Endothelial cell of umbilical vein (primary cell): ENCODE measurements at regions of chr1 and their contacts with region 1.

Region 1: GRCh38 chr1:60573726-60574409 is 500.3 kb upstream of the C1orf87 start:
- DNase-seq: peak; percentile 86
- H3K4me3 ChIP-seq: no peak overlapping the region
- H3K27ac ChIP-seq: peak overlapping the region; percentile 58
- H3K4me1 ChIP-seq: peaks cover 18% of the 10 kb centered on the region
- H3K27me3 ChIP-seq: no peaks in the 10 kb centered on the region
- CTCF ChIP-seq: no peak
- POLR2A ChIP-seq: peak; percentile 35

Region 2: DNA sequence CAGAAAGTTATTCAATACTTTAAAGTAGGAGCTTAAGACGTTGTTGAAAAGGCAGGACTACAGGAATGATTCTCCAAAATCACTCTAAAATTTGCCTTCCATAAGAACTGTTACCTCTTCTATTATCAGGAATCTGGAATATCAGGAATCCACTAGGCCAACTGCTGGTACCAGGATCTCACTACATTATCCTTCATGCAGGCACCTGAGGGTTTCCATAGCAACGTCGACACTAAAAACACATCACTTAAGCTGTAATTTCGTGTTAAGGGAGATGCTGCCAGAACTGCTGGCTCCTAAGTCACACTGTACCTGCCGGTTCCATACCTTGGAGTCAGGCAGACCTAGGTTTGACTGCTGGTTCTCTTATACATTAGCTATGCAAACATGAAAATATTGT is 360.6 kb before region 1 on chr1:
- CTCF ChIA-PET with region 1: no interaction called
- POLR2A ChIA-PET with region 1: no interaction called
- dilution Hi-C with region 1: no loop called
- intact Hi-C with region 1: no loop called
- DNase-seq: no peak
- H3K4me3 ChIP-seq: no peak overlapping the region
- H3K27ac ChIP-seq: no peak overlapping the region
- H3K4me1 ChIP-seq: no peaks in the 10 kb centered on the region
- H3K27me3 ChIP-seq: no peaks in the 10 kb centered on the region
- CTCF ChIP-seq: no peak
- POLR2A ChIP-seq: no peak

Region 3: GRCh38 chr1:60390593-60391282 is 183.1 kb before region 1 on chr1:
- CTCF ChIA-PET with region 1: no interaction called
- POLR2A ChIA-PET with region 1: no interaction called
- dilution Hi-C with region 1: no loop called
- intact Hi-C with region 1: no loop called
- DNase-seq: no peak
- H3K4me3 ChIP-seq: no peak overlapping the region
- H3K27ac ChIP-seq: no peak overlapping the region
- H3K4me1 ChIP-seq: peaks cover 3% of the 10 kb centered on the region
- H3K27me3 ChIP-seq: no peaks in the 10 kb centered on the region
- CTCF ChIP-seq: no peak
- POLR2A ChIP-seq: no peak

Region 4: DNA sequence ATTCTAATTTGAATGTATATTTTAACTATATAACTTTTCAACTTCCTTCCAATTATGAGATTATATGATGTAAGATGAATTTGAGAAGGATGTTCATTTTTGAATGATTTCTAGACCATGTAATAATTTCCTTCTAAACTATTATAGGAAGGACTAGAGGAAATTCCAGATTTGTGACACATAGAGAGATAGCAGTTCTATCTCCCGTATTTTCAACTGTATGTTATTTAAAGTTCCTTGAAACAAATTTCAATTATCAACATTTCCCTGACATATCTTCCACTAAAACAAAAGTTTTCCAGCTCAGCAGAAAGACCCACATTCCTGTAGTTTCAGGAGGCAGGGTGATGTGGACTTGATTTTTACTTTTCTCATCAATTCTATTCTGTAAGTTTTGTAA is 103.6 kb before region 1 on chr1:
- CTCF ChIA-PET with region 1: no interaction called
- POLR2A ChIA-PET with region 1: no interaction called
- dilution Hi-C with region 1: no loop called
- intact Hi-C with region 1: loop called (anchors 1 kb)
- DNase-seq: peak; percentile 66
- H3K4me3 ChIP-seq: no peak overlapping the region
- H3K27ac ChIP-seq: peak overlapping the region; percentile 82
- H3K4me1 ChIP-seq: peaks cover 27% of the 10 kb centered on the region
- H3K27me3 ChIP-seq: no peaks in the 10 kb centered on the region
- CTCF ChIP-seq: no peak
- POLR2A ChIP-seq: no peak

Region 5: DNA sequence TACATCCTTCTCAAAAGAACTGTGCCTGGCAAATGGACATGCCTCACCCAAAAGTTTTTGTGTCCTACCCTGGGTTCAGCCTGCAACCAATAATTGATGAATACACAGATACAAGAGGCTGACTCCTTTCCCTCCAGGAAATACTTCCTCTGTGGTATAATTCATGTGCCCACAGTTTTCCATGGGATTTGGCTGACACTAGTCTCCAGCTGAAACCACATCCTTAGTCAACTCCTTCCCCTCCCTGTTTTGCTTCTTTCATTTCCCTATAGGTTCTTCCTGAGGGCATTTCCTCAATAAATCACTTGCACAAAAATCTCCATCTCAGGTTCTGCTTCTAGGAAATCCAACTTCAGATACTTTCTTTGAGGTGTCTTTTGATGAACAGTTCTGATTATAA is 63.7 kb before region 1 on chr1:
- CTCF ChIA-PET with region 1: no interaction called
- POLR2A ChIA-PET with region 1: no interaction called
- dilution Hi-C with region 1: no loop called
- intact Hi-C with region 1: loop called (anchors 1 kb)
- DNase-seq: peak; percentile 89
- H3K4me3 ChIP-seq: no peak overlapping the region
- H3K27ac ChIP-seq: peak overlapping the region; percentile 13
- H3K4me1 ChIP-seq: peaks cover 28% of the 10 kb centered on the region
- H3K27me3 ChIP-seq: no peaks in the 10 kb centered on the region
- CTCF ChIP-seq: no peak
- POLR2A ChIP-seq: peak; percentile 79

Region 6: GRCh38 chr1:60589916-60590315 is 16.0 kb after region 1 on chr1:
- CTCF ChIA-PET with region 1: interaction called, 4 read pairs
- POLR2A ChIA-PET with region 1: no interaction called
- dilution Hi-C with region 1: no loop called
- intact Hi-C with region 1: loop called (anchors 2 kb)
- DNase-seq: peak; percentile 32
- H3K4me3 ChIP-seq: no peak overlapping the region
- H3K27ac ChIP-seq: no peak overlapping the region
- H3K4me1 ChIP-seq: peaks cover 14% of the 10 kb centered on the region
- H3K27me3 ChIP-seq: no peaks in the 10 kb centered on the region
- CTCF ChIP-seq: no peak
- POLR2A ChIP-seq: no peak

Region 7: DNA sequence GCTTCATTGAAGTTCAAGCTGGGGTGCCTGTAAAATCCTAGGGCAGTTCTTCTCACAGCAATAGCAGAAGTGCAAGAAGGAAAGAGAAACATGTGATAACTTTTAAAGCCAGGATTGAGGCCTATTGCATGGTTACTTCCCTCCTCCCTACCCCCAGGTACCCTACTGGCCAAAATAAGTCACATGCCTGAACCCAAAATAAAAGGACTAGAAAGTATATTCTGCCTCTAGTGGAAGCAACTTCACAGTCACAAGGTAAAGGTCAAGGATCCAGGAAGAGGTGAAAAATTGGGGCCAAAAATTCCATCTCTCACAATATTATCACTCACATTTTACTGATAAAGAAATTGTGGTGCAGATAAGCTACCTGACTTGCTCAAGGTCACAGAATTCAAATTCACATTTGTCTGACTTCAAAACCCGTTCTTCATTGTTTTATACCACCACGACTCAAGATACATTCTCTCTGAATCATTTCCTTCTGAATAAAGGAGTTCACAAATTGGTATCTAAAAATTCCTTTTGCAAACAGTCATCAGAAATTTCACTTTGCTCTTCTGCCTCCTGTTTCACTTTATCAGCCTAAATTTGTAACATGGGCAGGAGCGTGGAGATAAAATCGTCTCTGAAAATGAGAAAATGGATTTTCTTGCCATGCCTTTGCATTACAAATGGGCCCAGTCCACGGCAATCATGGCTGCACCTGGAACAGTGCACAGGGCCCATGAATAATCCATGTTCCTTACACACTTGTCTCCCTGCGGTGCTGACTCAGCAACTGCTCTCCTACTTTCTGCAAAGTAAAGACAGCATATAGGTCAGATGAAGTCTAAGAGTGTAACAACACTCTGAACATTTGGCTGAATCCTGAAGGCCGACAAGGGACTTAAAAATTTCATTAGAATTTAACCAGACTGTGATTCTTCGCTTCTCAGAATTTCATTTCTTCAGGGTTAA is 23.2 kb after region 1 on chr1:
- CTCF ChIA-PET with region 1: interaction called, 3 read pairs
- POLR2A ChIA-PET with region 1: interaction called, 3 read pairs
- dilution Hi-C with region 1: no loop called
- intact Hi-C with region 1: loop called (anchors 1 kb)
- DNase-seq: peak; percentile 57
- H3K4me3 ChIP-seq: no peak overlapping the region
- H3K27ac ChIP-seq: peak overlapping the region; percentile 61
- H3K4me1 ChIP-seq: peaks cover 22% of the 10 kb centered on the region
- H3K27me3 ChIP-seq: no peaks in the 10 kb centered on the region
- CTCF ChIP-seq: peak in 1 of 2 donors; percentile 3
- POLR2A ChIP-seq: no peak

Region 8: DNA sequence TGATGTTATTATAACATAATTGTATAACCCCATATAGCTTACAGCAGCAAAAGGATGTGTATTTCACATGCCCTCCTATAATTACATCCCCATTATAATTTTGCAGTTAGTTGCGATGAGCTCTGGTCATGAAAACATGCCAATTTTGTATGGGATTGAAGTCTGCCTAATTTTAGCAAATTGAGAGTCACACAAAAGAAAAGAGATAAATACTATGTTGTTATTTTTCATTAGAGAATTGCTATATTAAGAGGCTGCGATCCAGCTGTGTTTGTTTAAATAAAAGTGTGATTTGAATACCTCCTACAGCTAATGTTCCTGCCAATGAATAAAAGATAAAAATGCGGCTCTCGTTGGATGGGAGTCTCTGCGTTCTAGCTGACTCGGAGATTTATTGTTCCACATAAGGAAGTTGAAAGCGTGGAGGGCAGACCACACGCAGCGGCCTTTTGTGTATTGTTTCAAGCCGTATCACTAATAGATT is 47.5 kb after region 1 on chr1:
- CTCF ChIA-PET with region 1: no interaction called
- POLR2A ChIA-PET with region 1: no interaction called
- dilution Hi-C with region 1: no loop called
- intact Hi-C with region 1: loop called (anchors 1 kb)
- DNase-seq: peak; percentile 90
- H3K4me3 ChIP-seq: no peak overlapping the region
- H3K27ac ChIP-seq: peak overlapping the region; percentile 46
- H3K4me1 ChIP-seq: peaks cover 29% of the 10 kb centered on the region
- H3K27me3 ChIP-seq: no peaks in the 10 kb centered on the region
- CTCF ChIP-seq: no peak
- POLR2A ChIP-seq: no peak

Region 9: DNA sequence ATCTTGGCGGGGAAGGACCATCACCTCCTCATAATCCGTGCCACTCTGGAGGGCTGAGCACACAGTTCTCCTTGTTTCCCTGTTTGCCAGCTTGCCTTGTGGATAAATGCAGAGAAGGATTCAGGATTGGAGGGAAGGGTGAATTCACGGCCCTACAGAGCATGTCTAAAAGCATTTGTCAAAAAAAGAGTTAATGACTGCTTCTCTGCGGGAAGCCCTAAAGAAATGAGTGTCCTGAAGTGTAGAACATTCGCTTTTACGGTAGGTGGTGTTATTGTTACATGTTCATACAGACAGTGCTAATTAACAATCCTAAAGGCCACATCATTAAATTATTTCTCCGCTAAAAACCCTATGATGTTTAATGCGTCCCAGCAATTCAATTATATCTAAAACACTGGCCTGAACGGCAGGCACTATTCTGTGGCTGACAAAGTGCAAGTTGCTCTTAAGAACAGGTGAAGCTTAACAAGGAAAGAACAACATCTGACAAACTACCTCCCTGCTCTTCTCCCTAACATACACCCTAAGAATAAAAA is 396.2 kb after region 1 on chr1:
- CTCF ChIA-PET with region 1: no interaction called
- POLR2A ChIA-PET with region 1: no interaction called
- dilution Hi-C with region 1: no loop called
- intact Hi-C with region 1: loop called (anchors 10 kb)
- DNase-seq: peak; percentile 57
- H3K4me3 ChIP-seq: no peak overlapping the region
- H3K27ac ChIP-seq: no peak overlapping the region
- H3K4me1 ChIP-seq: peaks cover 5% of the 10 kb centered on the region
- H3K27me3 ChIP-seq: no peaks in the 10 kb centered on the region
- CTCF ChIP-seq: peak in 1 of 2 donors; percentile 21
- POLR2A ChIP-seq: no peak